Natural killer cell (primary cell): ENCODE measurements at regions of chr3 and their contacts with region 1.

Region 1: DNA sequence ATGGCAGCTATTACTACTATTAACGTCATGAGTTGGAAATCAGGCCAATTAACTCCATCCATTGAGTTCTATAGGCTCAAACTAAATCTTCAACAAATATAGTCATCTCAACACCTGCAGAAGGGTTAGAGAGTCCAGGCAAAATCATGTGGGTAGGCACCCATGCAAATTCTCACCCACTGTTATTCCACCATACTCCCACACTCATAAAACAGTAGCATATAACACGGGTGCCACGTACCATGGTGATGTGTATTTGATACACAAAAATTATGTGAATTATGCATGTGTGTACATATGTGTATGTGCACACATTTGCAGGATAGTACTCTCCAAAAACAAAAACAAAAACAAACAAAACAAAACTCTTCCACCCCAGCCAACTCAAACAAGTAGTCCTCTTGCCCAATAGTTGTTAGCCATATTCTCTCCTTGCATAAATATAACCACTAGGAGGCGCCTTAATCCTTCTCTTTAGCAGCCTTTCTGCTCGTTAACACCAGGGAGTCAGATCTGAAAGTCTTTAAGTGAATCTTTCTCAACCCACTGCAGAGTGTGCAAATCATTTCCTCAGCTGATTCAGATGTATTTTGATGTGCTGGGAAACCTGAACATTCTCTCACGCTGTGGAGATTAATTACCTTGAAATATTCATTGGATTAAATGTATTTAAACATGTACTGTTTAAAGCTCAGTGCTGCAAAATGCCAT is 38.0 kb upstream of the COPB2 start:
- DNase-seq: peak in 1 of 2 donors; percentile 62
- ATAC-seq: peak in 2 of 3 donors; percentile 46 to 74
- H3K4me3 ChIP-seq: no peak overlapping the region
- H3K4me3 Mint-ChIP-seq: no peak overlapping the region
- H3K27ac ChIP-seq: no peak overlapping the region
- H3K27ac Mint-ChIP-seq: no peak overlapping the region
- H3K4me1 ChIP-seq: no peaks in the 10 kb centered on the region
- H3K4me1 Mint-ChIP-seq: peaks cover 0 to 4% of the 10 kb centered on the region in 2 donors
- H3K27me3 ChIP-seq: no peaks in the 10 kb centered on the region
- H3K27me3 Mint-ChIP-seq: no peaks in the 10 kb centered on the region
- CTCF ChIP-seq: peak; percentile 71

Region 2: GRCh38 chr3:139541156-139541897 is 113.9 kb after region 1 on chr3:
- intact Hi-C with region 1: no loop called
- DNase-seq: no peak
- ATAC-seq: no peak
- H3K4me3 ChIP-seq: no peak overlapping the region
- H3K4me3 Mint-ChIP-seq: no peak overlapping the region
- H3K27ac ChIP-seq: no peak overlapping the region
- H3K27ac Mint-ChIP-seq: no peak overlapping the region
- H3K4me1 ChIP-seq: no peaks in the 10 kb centered on the region
- H3K4me1 Mint-ChIP-seq: peaks cover 0 to 6% of the 10 kb centered on the region in 2 donors
- H3K27me3 ChIP-seq: peaks cover 5% of the 10 kb centered on the region
- H3K27me3 Mint-ChIP-seq: peaks cover 34 to 41% of the 10 kb centered on the region in 2 donors
- CTCF ChIP-seq: no peak

Region 3: GRCh38 chr3:139655909-139656595 is 228.6 kb after region 1 on chr3:
- intact Hi-C with region 1: no loop called
- DNase-seq: no peak
- ATAC-seq: no peak
- H3K4me3 ChIP-seq: no peak overlapping the region
- H3K4me3 Mint-ChIP-seq: no peak overlapping the region
- H3K27ac ChIP-seq: no peak overlapping the region
- H3K27ac Mint-ChIP-seq: no peak overlapping the region
- H3K4me1 ChIP-seq: no peaks in the 10 kb centered on the region
- H3K4me1 Mint-ChIP-seq: no peaks in the 10 kb centered on the region
- H3K27me3 ChIP-seq: no peaks in the 10 kb centered on the region
- H3K27me3 Mint-ChIP-seq: no peaks in the 10 kb centered on the region
- CTCF ChIP-seq: no peak

Region 4: GRCh38 chr3:140736863-140737460 is 1309.5 kb after region 1 on chr3:
- intact Hi-C with region 1: loop called (anchors 10 kb)
- DNase-seq: peak in 1 of 2 donors; percentile 7
- ATAC-seq: no peak
- H3K4me3 ChIP-seq: no peak overlapping the region
- H3K4me3 Mint-ChIP-seq: no peak overlapping the region
- H3K27ac ChIP-seq: no peak overlapping the region
- H3K27ac Mint-ChIP-seq: no peak overlapping the region
- H3K4me1 ChIP-seq: no peaks in the 10 kb centered on the region
- H3K4me1 Mint-ChIP-seq: no peaks in the 10 kb centered on the region
- H3K27me3 ChIP-seq: no peaks in the 10 kb centered on the region
- H3K27me3 Mint-ChIP-seq: peaks cover 13 to 16% of the 10 kb centered on the region in 2 donors
- CTCF ChIP-seq: no peak